Gastrocnemius medialis (tissue), 4 donors: ENCODE measurements at regions of chr14 and their contacts with region 1.

Region 1: GRCh38 chr14:90758028-90758889 is 58.0 kb downstream of the TTC7B start:
- DNase-seq: peak; percentile 87 to 90
- ATAC-seq: peak; percentile 57 to 61
- H3K4me3 ChIP-seq: peak overlapping the region; percentile 54 to 66 (median 58)
- H3K27ac ChIP-seq: peak overlapping the region; percentile 91 to 97 (median 95)
- H3K4me1 ChIP-seq: peaks cover 15 to 29% of the 10 kb centered on the region in 2 donors
- H3K27me3 ChIP-seq: no peaks in the 10 kb centered on the region
- CTCF ChIP-seq: peak; percentile 86 to 96 (median 94)
- POLR2A ChIP-seq: peak; percentile 78 to 80

Region 2: DNA sequence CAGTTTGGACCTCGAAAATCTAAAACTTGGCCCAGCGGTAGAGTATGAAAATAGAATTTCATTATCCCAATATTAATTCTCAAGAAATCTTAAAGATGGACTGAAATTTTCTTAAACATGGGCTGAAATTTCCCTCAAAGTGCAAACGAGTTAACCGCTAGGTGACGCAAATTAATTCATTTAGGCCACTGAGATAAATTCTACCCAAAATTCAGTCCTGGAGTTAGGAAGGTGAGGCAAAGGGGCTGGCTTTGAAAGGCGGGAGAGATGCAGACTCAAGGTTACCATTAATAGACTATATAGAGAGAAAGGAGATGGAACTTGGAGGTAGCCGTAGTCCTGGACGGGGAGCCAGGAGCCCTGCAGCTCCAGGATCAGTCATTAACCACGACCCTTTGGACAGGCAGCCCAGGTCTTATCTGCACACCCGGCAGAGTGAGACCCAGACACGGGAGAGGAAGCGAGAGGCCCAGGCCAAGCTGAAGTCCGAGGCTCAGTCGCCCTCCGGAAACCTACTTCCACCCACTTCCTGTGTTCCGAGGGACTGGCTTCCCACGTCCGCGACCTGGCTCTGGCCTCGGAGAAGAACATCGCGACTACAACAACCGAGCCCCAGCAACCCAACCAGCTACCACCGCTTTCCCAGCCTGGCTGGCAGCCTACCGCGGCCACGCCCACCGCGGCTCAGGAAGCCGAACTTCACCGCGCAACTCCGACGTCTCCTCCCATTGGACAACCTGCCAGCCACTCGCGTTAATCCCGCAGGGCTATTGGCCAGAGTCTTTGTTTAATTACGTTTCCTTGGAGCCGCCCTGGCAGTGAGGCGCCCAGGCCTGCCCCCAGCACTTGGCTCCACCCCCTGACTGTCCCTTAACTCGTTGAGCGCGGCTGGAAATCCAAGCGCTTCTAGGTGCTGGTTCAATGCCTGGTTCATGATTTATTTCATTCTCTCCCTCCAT is 803.9 kb before region 1 on chr14 and contains the start of gene EFCAB11:
- in situ Hi-C with region 1: loop called in 3 of 4 experiments (anchors 25 kb)
- intact Hi-C with region 1: loop called (anchors 5 kb)
- DNase-seq: peak; percentile 96 to 98
- ATAC-seq: peak; percentile 90 to 91
- H3K4me3 ChIP-seq: peak within 1 kb of the TSS; percentile 63 to 99 (median 73)
- H3K27ac ChIP-seq: peak within 1 kb of the TSS; percentile 82 to 87 (median 84)
- H3K4me1 ChIP-seq: peaks cover 10 to 13% of the 10 kb centered on the region in 2 donors
- H3K27me3 ChIP-seq: no peaks in the 10 kb centered on the region
- CTCF ChIP-seq: no peak
- POLR2A ChIP-seq: no peak
- total RNA-seq, gene EFCAB11: 0.69 to 1.6 (median 1.6) TPM

Region 3: GRCh38 chr14:90301668-90302090 is 456.6 kb before region 1 on chr14:
- in situ Hi-C with region 1: loop called in 3 of 4 experiments (anchors 5 to 10 kb)
- intact Hi-C with region 1: loop called (anchors 1 kb)
- DNase-seq: no peak
- ATAC-seq: peak; percentile 77 to 78
- H3K4me3 ChIP-seq: no peak overlapping the region
- H3K27ac ChIP-seq: peak overlapping the region; percentile 74 to 88 (median 82)
- H3K4me1 ChIP-seq: peaks cover 27 to 32% of the 10 kb centered on the region in 2 donors
- H3K27me3 ChIP-seq: no peaks in the 10 kb centered on the region
- CTCF ChIP-seq: peak in 4 of 5 experiments; percentile 36 to 66 (median 45)
- POLR2A ChIP-seq: no peak

Region 4: GRCh38 chr14:90587918-90588317 is 170.3 kb before region 1 on chr14:
- in situ Hi-C with region 1: no loop called
- intact Hi-C with region 1: loop called (anchors 5 kb)
- DNase-seq: peak; percentile 94 to 98
- ATAC-seq: peak; percentile 96 to 97
- H3K4me3 ChIP-seq: no peak overlapping the region
- H3K27ac ChIP-seq: peak overlapping the region; percentile 84 to 91 (median 87)
- H3K4me1 ChIP-seq: peaks cover 16 to 17% of the 10 kb centered on the region in 2 donors
- H3K27me3 ChIP-seq: no peaks in the 10 kb centered on the region
- CTCF ChIP-seq: no peak
- POLR2A ChIP-seq: no peak

Region 5: GRCh38 chr14:90704738-90705392 is 53.4 kb before region 1 on chr14:
- in situ Hi-C with region 1: no loop called
- intact Hi-C with region 1: no loop called
- DNase-seq: no peak
- ATAC-seq: no peak
- H3K4me3 ChIP-seq: no peak overlapping the region
- H3K27ac ChIP-seq: no peak overlapping the region
- H3K4me1 ChIP-seq: peaks cover 12 to 23% of the 10 kb centered on the region in 2 donors
- H3K27me3 ChIP-seq: no peaks in the 10 kb centered on the region
- CTCF ChIP-seq: no peak
- POLR2A ChIP-seq: no peak

Region 6: DNA sequence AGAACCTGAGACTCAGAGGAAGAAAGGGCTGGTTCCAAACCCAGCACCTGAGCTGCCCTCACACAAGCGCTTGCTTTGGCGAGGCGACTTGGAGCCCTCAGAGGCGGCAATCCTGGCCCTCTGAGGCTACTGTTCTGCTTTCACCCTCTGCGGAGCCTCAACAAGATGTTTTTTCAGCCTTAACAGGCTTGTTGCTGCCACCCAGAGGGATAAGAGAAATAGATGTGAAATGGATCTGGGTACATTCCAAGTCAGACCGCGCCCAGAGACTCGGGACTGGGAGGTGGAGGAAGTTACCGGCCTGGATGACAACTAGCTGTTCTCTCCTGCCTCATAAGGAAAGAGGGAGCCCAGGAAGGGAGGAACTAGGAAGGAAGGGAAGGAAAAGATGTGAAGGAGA is 31.6 kb before region 1 on chr14:
- in situ Hi-C with region 1: no loop called
- intact Hi-C with region 1: loop called (anchors 5 kb)
- DNase-seq: peak; percentile 78 to 79
- ATAC-seq: peak; percentile 88
- H3K4me3 ChIP-seq: no peak overlapping the region
- H3K27ac ChIP-seq: peak overlapping the region; percentile 62 to 81 (median 78)
- H3K4me1 ChIP-seq: peaks cover 16 to 19% of the 10 kb centered on the region in 2 donors
- H3K27me3 ChIP-seq: no peaks in the 10 kb centered on the region
- CTCF ChIP-seq: peak in 4 of 5 experiments; percentile 25 to 49 (median 32)
- POLR2A ChIP-seq: peak in 1 of 2 donors; percentile 29

Region 7: DNA sequence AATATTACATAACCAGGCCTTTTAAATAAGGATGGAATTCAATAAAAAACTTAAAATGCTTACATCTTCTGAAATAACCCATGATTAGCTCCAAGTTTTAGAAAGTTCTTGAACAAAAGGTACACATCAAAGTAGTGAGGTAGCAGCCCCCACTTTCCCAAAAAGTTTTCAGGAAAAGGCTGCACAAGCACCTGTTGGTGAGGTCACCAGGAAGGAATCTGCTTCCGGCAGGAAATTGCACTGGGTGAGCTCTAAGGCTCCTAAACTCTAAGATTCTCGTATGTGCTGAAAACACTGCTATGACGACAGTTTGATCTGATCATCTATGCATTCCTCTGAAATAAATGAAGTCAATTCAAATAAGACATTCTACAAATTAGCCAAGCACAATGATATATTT is 92.2 kb after region 1 on chr14:
- in situ Hi-C with region 1: no loop called
- intact Hi-C with region 1: no loop called
- DNase-seq: no peak
- ATAC-seq: peak; percentile 79 to 83
- H3K4me3 ChIP-seq: peak overlapping the region in 3 of 4 donors; percentile 14 to 31 (median 17)
- H3K27ac ChIP-seq: peak overlapping the region in 3 of 4 donors; percentile 60 to 66 (median 62)
- H3K4me1 ChIP-seq: peaks cover 5 to 17% of the 10 kb centered on the region in 2 donors
- H3K27me3 ChIP-seq: no peaks in the 10 kb centered on the region
- CTCF ChIP-seq: no peak
- POLR2A ChIP-seq: no peak

Region 8: GRCh38 chr14:91060351-91061055 is 302.2 kb after region 1 on chr14 and contains the start of gene RPS6KA5:
- in situ Hi-C with region 1: no loop called
- intact Hi-C with region 1: loop called (anchors 2 kb)
- DNase-seq: peak; percentile 100
- ATAC-seq: peak; percentile 94 to 95
- H3K4me3 ChIP-seq: peak within 1 kb of the TSS; percentile 73 to 94 (median 87)
- H3K27ac ChIP-seq: peak within 1 kb of the TSS; percentile 96 to 98 (median 96)
- H3K4me1 ChIP-seq: peaks cover 24 to 28% of the 10 kb centered on the region in 2 donors
- H3K27me3 ChIP-seq: no peaks in the 10 kb centered on the region
- CTCF ChIP-seq: peak; percentile 27 to 79 (median 48)
- POLR2A ChIP-seq: peak; percentile 91 to 97
- total RNA-seq, gene RPS6KA5: 5.8 to 18.4 (median 9.8) TPM